IMR-90 (cell line): ENCODE measurements at regions of chr4 and their contacts with region 1.

Region 1: DNA sequence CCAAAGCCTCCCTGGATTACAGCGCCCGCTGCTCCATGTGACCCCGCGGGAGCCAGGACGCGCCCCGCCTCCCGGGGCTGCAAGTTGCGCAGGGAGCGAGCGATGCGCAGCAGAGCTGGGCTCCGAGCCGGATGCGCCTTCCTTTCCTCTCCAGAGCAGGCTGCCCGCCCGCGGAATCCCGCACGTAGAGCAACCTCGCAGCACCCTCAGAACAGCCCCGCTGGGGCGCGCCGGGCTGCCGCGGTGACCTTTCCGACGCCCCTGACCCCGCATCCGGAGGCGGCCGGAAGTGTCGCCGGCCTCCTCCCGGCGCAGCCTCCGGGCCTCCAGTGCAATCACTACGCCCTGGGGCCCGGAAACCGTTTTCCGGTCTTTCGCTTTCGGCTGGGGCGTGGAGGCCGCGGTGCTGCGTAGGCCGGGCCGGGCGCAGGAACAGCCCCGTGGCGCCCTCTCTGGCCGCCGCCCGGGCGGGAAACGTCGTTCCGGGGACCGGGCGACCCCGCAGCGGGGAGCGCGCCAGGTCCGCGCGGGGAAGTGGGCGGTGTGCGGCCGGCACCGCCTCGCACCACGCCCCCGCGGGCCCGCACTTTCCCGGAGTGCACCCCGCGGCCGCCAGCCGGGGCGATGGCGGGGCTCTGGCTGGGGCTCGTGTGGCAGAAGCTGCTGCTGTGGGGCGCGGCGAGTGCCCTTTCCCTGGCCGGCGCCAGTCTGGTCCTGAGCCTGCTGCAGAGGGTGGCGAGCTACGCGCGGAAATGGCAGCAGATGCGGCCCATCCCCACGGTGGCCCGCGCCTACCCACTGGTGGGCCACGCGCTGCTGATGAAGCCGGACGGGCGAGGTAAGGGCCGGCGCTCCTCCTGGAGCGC is at the start of gene CYP4V2:
- DNase-seq: peak; percentile 72
- ATAC-seq: peak; percentile 84
- H3K4me3 ChIP-seq: peak within 1 kb of the TSS; percentile 75
- H3K27ac ChIP-seq: peak within 1 kb of the TSS; percentile 80
- H3K4me1 ChIP-seq: no peaks in the 10 kb centered on the region; the same call in 1 of the 2 replicates
- H3K27me3 ChIP-seq: no peaks in the 10 kb centered on the region; the same call in 1 of the 2 replicates
- CTCF ChIP-seq: peak; percentile 36
- POLR2A ChIP-seq: no peak
- RAD21 ChIP-seq: 0 out of 2 replicates have a peak, but pooled peaks have one; percentile 5
- total RNA-seq, gene CYP4V2: 3.9 and 5.0 TPM in 2 replicates

Region 2: DNA sequence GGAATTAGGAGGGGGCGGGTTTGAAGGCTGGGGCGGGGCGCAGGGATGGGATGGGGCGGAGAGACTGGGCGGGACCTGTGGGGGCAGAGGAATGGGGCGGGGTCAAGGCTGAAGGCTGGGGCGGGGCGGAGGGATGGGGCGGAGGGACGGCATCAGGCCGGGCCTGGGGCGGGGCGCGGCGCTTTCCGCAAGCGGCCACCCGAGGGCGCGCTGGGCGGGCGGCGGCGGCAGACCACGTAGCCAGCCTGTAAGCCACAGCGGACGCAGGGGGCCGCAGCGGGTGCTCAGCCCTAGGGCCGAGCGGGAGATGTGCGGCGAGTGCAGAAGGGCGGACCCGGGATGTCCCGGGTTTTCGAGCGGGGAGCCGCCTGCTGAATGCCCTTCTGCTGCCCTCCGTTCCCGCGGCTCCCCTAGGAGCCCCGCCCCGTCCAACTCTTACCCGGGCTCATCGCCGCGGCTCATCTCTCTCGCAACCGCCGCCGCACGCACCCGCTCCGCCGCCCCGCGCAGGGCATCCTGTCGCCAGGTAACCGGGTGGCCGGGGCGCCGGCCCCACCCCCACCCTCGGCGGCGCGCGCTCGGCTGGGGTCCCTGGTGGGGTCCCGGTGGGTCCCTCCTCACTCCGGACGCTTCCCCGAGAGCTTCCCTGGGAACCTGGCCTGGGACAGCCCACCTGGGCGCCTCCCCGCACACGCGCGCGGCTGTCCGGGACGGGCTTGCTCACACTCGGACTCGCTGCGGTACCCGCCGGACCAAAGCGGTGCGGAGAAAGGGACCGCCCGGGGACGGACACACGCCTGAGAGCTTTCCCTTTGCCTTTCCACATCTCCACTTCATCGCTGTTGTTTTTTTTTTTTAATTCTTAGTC is 720.0 kb before region 1 on chr4 and contains the start of gene CCDC110:
- CTCF ChIA-PET with region 1: no interaction called
- POLR2A ChIA-PET with region 1: no interaction called
- dilution Hi-C with region 1: no loop called
- in situ Hi-C with region 1: no loop called
- intact Hi-C with region 1: no loop called
- DNase-seq: peak; percentile 92
- ATAC-seq: peak; percentile 97
- H3K4me3 ChIP-seq: peak within 1 kb of the TSS; percentile 89
- H3K27ac ChIP-seq: peak within 1 kb of the TSS; percentile 16; the same call in 1 of the 2 replicates
- H3K4me1 ChIP-seq: peaks cover 3% of the 10 kb centered on the region; the same call in 1 of the 2 replicates
- H3K27me3 ChIP-seq: no peaks in the 10 kb centered on the region
- CTCF ChIP-seq: peak; percentile 75
- POLR2A ChIP-seq: no peak
- RAD21 ChIP-seq: peak; percentile 66
- total RNA-seq, gene CCDC110: 0.90 and 1.4 TPM in 2 replicates

Region 3: DNA sequence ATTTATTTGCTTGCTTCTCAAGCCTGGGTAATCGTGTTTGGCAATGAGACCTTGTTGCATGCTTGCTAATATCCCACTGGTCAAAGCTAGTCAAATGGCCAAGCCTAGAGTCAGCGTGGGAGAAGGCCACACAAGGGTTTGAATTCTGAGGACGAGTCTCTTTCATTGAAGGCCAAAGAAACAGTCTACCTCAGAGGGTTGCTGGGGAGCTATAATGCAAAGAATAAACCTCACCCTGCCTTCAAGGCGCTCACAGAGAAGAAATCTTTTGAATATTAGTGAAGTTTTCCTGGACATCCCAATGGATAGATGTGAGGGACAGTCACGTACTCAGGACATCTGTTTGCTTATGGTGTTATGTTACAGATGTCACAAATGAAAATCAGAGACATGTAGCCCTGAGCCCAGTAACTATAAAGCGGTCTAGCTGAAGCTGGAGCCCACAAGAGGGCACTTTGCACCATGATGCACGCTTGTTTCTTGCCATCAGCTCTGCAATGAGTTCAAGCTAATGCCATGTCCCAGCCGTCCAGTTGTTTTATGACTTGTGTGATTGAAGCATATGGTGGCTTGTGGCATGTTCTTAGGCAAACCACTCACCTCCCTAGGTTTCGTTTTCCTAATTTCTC is 123.6 kb before region 1 on chr4:
- CTCF ChIA-PET with region 1: no interaction called
- POLR2A ChIA-PET with region 1: no interaction called
- dilution Hi-C with region 1: no loop called
- in situ Hi-C with region 1: no loop called
- intact Hi-C with region 1: loop called (anchors 5 kb)
- DNase-seq: peak; percentile 19
- ATAC-seq: peak; percentile 79
- H3K4me3 ChIP-seq: no peak overlapping the region
- H3K27ac ChIP-seq: no peak overlapping the region
- H3K4me1 ChIP-seq: peaks cover 1% of the 10 kb centered on the region; the same call in 1 of the 2 replicates
- H3K27me3 ChIP-seq: no peaks in the 10 kb centered on the region
- CTCF ChIP-seq: peak; percentile 27; the same call in 1 of the 2 replicates
- POLR2A ChIP-seq: no peak
- RAD21 ChIP-seq: peak; percentile 22; the same call in 1 of the 2 replicates

Region 4: DNA sequence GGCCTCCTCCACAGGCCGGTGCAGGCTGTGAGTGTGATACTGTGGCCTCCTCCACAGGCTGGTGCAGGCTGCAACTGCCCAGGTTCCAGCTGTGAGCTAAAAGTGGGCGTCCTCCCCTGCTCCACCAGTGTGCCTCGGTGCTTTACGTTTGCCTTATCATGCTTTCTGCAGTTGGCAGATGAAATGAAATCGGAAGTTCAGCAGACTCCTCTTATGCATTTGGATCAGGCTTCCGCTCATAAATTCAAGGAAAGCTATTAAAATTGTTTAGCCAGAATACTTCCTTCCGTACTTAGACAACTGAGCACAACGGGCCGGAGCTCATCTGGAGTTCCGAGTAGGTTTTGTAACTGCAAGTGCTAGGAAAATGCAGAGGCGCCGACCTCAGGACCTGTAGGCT is 12.0 kb after region 1 on chr4:
- CTCF ChIA-PET with region 1: interaction called, 5 read pairs
- POLR2A ChIA-PET with region 1: interaction called, 3 read pairs
- dilution Hi-C with region 1: no loop called
- in situ Hi-C with region 1: no loop called
- intact Hi-C with region 1: loop called (anchors 1 kb)
- DNase-seq: peak; percentile 12
- ATAC-seq: no peak; the same call in 1 of the 2 replicates
- H3K4me3 ChIP-seq: no peak overlapping the region
- H3K27ac ChIP-seq: no peak overlapping the region
- H3K4me1 ChIP-seq: no peaks in the 10 kb centered on the region; the same call in 1 of the 2 replicates
- H3K27me3 ChIP-seq: no peaks in the 10 kb centered on the region
- CTCF ChIP-seq: no peak
- POLR2A ChIP-seq: 0 out of 2 replicates have a peak, but pooled peaks have one; percentile 27
- RAD21 ChIP-seq: no peak

Region 5: GRCh38 chr4:186240848-186241491 is 49.5 kb after region 1 on chr4:
- CTCF ChIA-PET with region 1: no interaction called
- POLR2A ChIA-PET with region 1: no interaction called
- dilution Hi-C with region 1: no loop called
- in situ Hi-C with region 1: no loop called
- intact Hi-C with region 1: no loop called
- DNase-seq: no peak
- ATAC-seq: no peak
- H3K4me3 ChIP-seq: no peak overlapping the region
- H3K27ac ChIP-seq: no peak overlapping the region
- H3K4me1 ChIP-seq: no peaks in the 10 kb centered on the region
- H3K27me3 ChIP-seq: no peaks in the 10 kb centered on the region
- CTCF ChIP-seq: no peak
- POLR2A ChIP-seq: no peak
- RAD21 ChIP-seq: no peak

Region 6: GRCh38 chr4:186472948-186473347 is 281.5 kb after region 1 on chr4:
- CTCF ChIA-PET with region 1: no interaction called
- POLR2A ChIA-PET with region 1: no interaction called
- dilution Hi-C with region 1: no loop called
- in situ Hi-C with region 1: no loop called
- intact Hi-C with region 1: loop called (anchors 10 kb)
- DNase-seq: peak; percentile 56
- ATAC-seq: peak; percentile 81
- H3K4me3 ChIP-seq: no peak overlapping the region
- H3K27ac ChIP-seq: no peak overlapping the region
- H3K4me1 ChIP-seq: 0 out of 2 replicates have a peak, but pooled peaks cover 1% of the 10 kb centered on the region
- H3K27me3 ChIP-seq: peaks cover 5% of the 10 kb centered on the region; the same call in 1 of the 2 replicates
- CTCF ChIP-seq: peak; percentile 64
- POLR2A ChIP-seq: no peak
- RAD21 ChIP-seq: peak; percentile 49

Region 7: GRCh38 chr4:186666252-186666651 is 474.8 kb after region 1 on chr4:
- CTCF ChIA-PET with region 1: no interaction called
- POLR2A ChIA-PET with region 1: no interaction called
- dilution Hi-C with region 1: no loop called
- in situ Hi-C with region 1: no loop called
- intact Hi-C with region 1: no loop called
- DNase-seq: peak; percentile 26
- ATAC-seq: peak; percentile 10; the same call in 1 of the 2 replicates
- H3K4me3 ChIP-seq: no peak overlapping the region
- H3K27ac ChIP-seq: no peak overlapping the region
- H3K4me1 ChIP-seq: peaks cover 14% of the 10 kb centered on the region
- H3K27me3 ChIP-seq: no peaks in the 10 kb centered on the region
- CTCF ChIP-seq: no peak
- POLR2A ChIP-seq: no peak
- RAD21 ChIP-seq: no peak